ENCODE measurements at regions of chr17 and their contacts with region 1.

Region 1: GRCh38 chr17:7306911-7307686 is at the start of gene EIF5A:
- DNase-seq: peak; percentile 99 to 100 (median 100)
- H3K4me3 ChIP-seq: peak within 1 kb of the TSS; percentile 81 to 85
- H3K4me3 Mint-ChIP-seq: peak within 1 kb of the TSS; percentile 93 to 97 (median 95)
- H3K27ac ChIP-seq: peak within 1 kb of the TSS; percentile 100
- H3K27ac Mint-ChIP-seq: peak within 1 kb of the TSS; percentile 99 to 100 (median 99)
- H3K4me1 ChIP-seq: peaks cover 35% of the 10 kb centered on the region
- H3K4me1 Mint-ChIP-seq: peaks cover 29 to 47% (median 36%) of the 10 kb centered on the region in 4 donors
- H3K27me3 ChIP-seq: no peaks in the 10 kb centered on the region
- H3K27me3 Mint-ChIP-seq: peaks cover 0 to 4% of the 10 kb centered on the region in 2 donors
- total RNA-seq, gene EIF5A: 240 to 244 TPM

Region 2: DNA sequence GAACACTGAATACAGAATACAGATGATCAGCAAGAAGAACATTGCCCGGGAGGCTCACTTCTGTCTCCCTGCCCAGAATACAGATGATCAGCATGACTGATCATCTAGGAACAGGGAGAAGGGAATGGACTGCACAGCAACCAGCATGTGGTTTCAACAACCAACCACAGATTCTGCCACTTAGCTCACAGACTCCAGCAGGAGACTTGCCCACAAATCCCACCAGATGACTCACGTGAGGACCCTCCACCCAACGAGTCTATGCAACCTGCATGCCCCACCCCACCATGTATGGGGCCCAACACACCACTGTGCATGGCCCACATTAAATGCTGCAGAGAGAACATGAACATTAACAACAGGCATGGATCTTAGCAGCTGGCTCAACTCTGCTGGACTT is 347.4 kb before region 1 on chr17:
- CTCF ChIA-PET with region 1: no interaction called
- POLR2A ChIA-PET with region 1: no interaction called
- intact Hi-C with region 1: no loop called
- DNase-seq: no peak
- H3K4me3 ChIP-seq: no peak overlapping the region
- H3K4me3 Mint-ChIP-seq: no peak overlapping the region
- H3K27ac ChIP-seq: no peak overlapping the region
- H3K27ac Mint-ChIP-seq: no peak overlapping the region
- H3K4me1 ChIP-seq: no peaks in the 10 kb centered on the region
- H3K4me1 Mint-ChIP-seq: no peaks in the 10 kb centered on the region
- H3K27me3 ChIP-seq: no peaks in the 10 kb centered on the region
- H3K27me3 Mint-ChIP-seq: no peaks in the 10 kb centered on the region

Region 3: DNA sequence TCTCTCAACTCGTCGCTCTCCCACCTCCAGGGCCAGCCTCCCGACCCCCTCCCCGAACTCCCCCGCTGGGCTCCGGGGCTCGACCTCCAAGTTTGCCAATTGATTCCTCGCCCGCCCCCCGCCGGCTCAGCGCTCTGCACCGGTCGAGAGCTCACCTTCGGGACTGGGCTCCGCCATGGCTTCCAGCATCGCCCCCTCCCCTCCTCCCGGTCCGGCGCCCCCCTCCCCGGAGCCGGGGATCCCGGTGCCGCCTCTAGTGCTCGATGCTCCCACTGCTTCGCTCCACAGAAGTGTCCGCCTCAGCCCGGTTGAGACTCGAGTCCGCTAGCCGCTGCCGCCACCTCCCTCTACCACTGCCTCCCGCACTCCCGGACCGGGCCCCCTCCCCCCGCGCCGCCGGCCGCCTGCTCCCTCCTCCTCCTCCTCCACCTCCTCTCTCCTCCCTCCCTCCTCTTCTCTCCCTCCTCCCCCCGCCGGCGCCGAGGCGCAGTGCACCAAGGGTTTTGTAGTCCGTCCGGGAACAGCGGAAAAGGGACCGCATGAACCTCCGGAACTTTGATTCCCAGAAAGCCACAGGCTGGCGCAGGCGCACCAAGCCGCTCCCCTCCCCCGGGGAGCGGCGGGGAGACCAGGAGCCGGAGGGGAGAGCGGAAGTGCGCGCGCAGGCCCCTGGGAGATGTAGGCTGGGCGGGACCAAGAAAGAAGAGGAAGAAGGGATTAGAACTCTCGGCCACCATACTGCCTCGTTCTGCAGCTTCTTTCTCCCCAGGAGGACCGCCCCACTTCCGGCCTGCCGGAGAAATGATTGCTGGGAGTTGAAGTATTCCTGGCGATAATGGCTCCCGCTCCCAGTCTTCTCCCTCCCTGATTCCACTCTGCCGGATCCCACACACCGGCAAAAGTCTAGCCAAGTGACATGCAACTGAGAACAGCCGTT is 67.7 kb before region 1 on chr17 and contains the start of gene PHF23:
- CTCF ChIA-PET with region 1: no interaction called
- POLR2A ChIA-PET with region 1: interaction called, 24 read pairs
- intact Hi-C with region 1: loop called (anchors 1 kb)
- DNase-seq: peak; percentile 97 to 98 (median 98)
- H3K4me3 ChIP-seq: peak within 1 kb of the TSS; percentile 85 to 86
- H3K4me3 Mint-ChIP-seq: peak within 1 kb of the TSS; percentile 94 to 99 (median 96)
- H3K27ac ChIP-seq: peak within 1 kb of the TSS; percentile 85
- H3K27ac Mint-ChIP-seq: peak within 1 kb of the TSS; percentile 90 to 100 (median 98)
- H3K4me1 ChIP-seq: peaks cover 61% of the 10 kb centered on the region
- H3K4me1 Mint-ChIP-seq: peaks cover 41 to 75% (median 54%) of the 10 kb centered on the region in 4 donors
- H3K27me3 ChIP-seq: no peaks in the 10 kb centered on the region
- H3K27me3 Mint-ChIP-seq: peaks cover 0 to 2% of the 10 kb centered on the region in 2 donors
- total RNA-seq, gene PHF23: 45.8 to 55.8 TPM

Region 4: DNA sequence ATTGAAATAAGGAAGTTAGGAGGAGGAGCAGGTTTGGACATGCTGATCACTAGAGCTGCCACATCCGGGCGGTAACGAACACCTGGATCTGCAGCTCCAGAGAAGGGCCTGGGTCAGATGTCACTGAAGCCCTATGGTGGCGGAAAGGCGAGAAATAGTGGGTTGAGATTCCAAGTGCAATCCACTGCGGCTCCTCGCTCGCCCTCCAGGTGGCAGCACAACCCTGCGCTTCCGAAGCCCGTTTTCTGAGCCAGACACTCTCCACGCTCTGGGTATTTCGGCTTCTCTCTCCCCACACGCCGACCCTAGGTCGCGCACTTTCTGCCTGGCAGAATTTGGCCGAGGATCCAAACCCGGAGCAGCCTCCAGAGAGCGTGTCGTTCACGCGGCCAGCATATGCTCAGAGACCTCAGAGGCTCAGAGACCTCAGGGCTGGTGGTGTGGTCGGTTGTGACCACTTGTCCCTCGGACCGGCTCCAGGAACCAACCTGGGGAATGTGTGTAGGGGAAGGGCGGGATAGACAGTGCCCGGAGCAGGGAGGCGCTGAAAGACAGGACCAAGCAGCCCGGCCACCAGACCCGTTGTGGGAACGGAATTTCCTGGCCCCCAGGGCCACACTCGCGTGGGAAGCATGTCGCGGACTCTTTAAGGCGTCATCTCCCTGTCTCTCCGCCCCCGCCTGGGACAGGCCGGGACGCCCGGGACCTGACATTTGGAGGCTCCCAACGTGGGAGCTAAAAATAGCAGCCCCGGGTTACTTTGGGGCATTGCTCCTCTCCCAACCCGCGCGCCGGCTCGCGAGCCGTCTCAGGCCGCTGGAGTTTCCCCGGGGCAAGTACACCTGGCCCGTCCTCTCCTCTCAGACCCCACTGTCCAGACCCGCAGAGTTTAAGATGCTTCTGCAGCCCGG is 26.3 kb before region 1 on chr17:
- CTCF ChIA-PET with region 1: interaction called, 3 read pairs
- POLR2A ChIA-PET with region 1: interaction called, 3 read pairs
- intact Hi-C with region 1: loop called (anchors 1 kb)
- DNase-seq: peak; percentile 82 to 86 (median 85)
- H3K4me3 ChIP-seq: peak overlapping the region; percentile 23 to 58
- H3K4me3 Mint-ChIP-seq: peak overlapping the region; percentile 77 to 90 (median 82)
- H3K27ac ChIP-seq: peak overlapping the region; percentile 41
- H3K27ac Mint-ChIP-seq: peak overlapping the region; percentile 36 to 84 (median 66)
- H3K4me1 ChIP-seq: peaks cover 25% of the 10 kb centered on the region
- H3K4me1 Mint-ChIP-seq: peaks cover 4 to 28% (median 18%) of the 10 kb centered on the region in 4 donors
- H3K27me3 ChIP-seq: peaks cover 10% of the 10 kb centered on the region
- H3K27me3 Mint-ChIP-seq: peaks cover 15 to 19% of the 10 kb centered on the region in 2 donors

Region 5: DNA sequence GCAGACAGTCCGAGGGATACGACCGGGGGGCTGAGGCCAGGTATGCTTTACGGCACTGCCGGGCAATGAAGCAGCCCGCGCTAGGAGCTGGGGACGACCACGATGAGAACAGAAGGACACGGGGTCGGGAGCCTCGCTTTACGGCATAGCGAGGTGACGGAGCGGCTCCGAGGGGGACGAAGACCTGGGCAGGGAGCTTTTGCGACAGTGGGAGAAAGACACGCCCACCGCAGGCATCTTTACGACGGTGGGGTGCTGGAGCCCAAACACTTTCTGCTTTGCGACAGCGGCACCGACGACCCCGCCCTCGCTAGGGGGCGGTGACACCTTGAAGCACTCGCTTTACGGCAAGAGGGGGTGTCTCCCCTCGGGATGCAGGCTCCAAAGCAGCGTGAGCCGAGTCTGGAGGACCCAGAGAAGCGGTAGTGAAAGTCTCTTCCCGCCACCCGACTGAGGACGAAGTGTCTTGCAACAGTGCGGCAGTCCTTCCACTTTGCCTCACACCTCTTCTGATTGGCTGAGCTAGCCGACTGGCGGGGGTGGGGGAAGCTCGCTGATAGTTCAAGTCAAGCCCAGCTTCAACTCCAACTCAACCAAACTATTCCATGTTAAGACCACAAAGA is 22.4 kb after region 1 on chr17:
- CTCF ChIA-PET with region 1: interaction called, 5 read pairs
- POLR2A ChIA-PET with region 1: interaction called, 187 read pairs
- intact Hi-C with region 1: loop called (anchors 1 kb)
- DNase-seq: peak; percentile 97 to 99 (median 97)
- H3K4me3 ChIP-seq: peak overlapping the region; percentile 94 to 99
- H3K4me3 Mint-ChIP-seq: peak overlapping the region; percentile 97 to 98 (median 98)
- H3K27ac ChIP-seq: peak overlapping the region; percentile 82
- H3K27ac Mint-ChIP-seq: peak overlapping the region; percentile 93 to 99 (median 98)
- H3K4me1 ChIP-seq: peaks cover 49% of the 10 kb centered on the region
- H3K4me1 Mint-ChIP-seq: peaks cover 32 to 58% (median 42%) of the 10 kb centered on the region in 4 donors
- H3K27me3 ChIP-seq: no peaks in the 10 kb centered on the region
- H3K27me3 Mint-ChIP-seq: no peaks in the 10 kb centered on the region

Region 6: GRCh38 chr17:7583253-7584109 is 276.4 kb after region 1 on chr17 and contains the start of gene MPDU1:
- CTCF ChIA-PET with region 1: no interaction called
- POLR2A ChIA-PET with region 1: interaction called, 4 read pairs
- intact Hi-C with region 1: loop called (anchors 1 kb)
- DNase-seq: peak; percentile 95 to 97 (median 97)
- H3K4me3 ChIP-seq: peak within 1 kb of the TSS; percentile 91 to 92
- H3K4me3 Mint-ChIP-seq: peak within 1 kb of the TSS; percentile 99 to 100 (median 100)
- H3K27ac ChIP-seq: peak within 1 kb of the TSS; percentile 97
- H3K27ac Mint-ChIP-seq: peak within 1 kb of the TSS; percentile 99 to 100 (median 100)
- H3K4me1 ChIP-seq: peaks cover 50% of the 10 kb centered on the region
- H3K4me1 Mint-ChIP-seq: peaks cover 20 to 65% (median 43%) of the 10 kb centered on the region in 4 donors
- H3K27me3 ChIP-seq: no peaks in the 10 kb centered on the region
- H3K27me3 Mint-ChIP-seq: no peaks in the 10 kb centered on the region
- total RNA-seq, gene MPDU1: 23.8 to 25.0 TPM

Region 7: GRCh38 chr17:7834962-7835813 is 528.1 kb after region 1 on chr17:
- CTCF ChIA-PET with region 1: no interaction called
- POLR2A ChIA-PET with region 1: no interaction called
- intact Hi-C with region 1: loop called (anchors 1 kb)
- DNase-seq: peak; percentile 90 to 98 (median 92)
- H3K4me3 ChIP-seq: peak overlapping the region; percentile 76 to 84
- H3K4me3 Mint-ChIP-seq: peak overlapping the region; percentile 90 to 98 (median 94)
- H3K27ac ChIP-seq: peak overlapping the region; percentile 98
- H3K27ac Mint-ChIP-seq: peak overlapping the region; percentile 99 to 100 (median 99)
- H3K4me1 ChIP-seq: peaks cover 45% of the 10 kb centered on the region
- H3K4me1 Mint-ChIP-seq: peaks cover 36 to 64% (median 42%) of the 10 kb centered on the region in 4 donors
- H3K27me3 ChIP-seq: no peaks in the 10 kb centered on the region
- H3K27me3 Mint-ChIP-seq: peaks cover 0 to 9% of the 10 kb centered on the region in 2 donors